ENCODE measurements at regions of chr16 and their contacts with region 1.

Region 1: GRCh38 chr16:711548-712320 is 3.2 kb upstream of the METRN start:
- DNase-seq: peak; percentile 90
- ATAC-seq: peak; percentile 67

Region 2: DNA sequence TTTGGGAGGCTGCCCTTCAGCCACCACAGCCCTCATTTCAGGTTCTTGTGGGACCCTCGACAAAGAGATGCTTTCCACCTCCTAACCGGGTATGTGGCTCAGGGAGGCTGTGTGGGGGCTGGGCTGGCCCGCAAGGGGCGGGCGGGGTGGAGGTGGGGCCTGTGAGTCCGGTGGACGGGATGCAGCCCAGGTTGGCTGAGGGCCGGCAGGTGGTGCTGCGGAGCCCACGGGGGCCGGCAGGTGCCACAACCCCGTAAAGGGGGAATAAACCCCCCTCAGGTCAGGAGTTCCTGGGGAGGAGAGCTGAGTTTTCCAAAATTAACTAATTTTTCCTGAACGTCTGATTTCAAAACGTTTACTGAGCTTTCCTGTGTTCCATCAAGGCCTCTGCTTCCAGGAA is 34.0 kb after region 1 on chr16:
- intact Hi-C with region 1: loop called (anchors 5 kb)
- DNase-seq: no peak
- ATAC-seq: no peak

Region 3: GRCh38 chr16:785563-786535 is 74.1 kb after region 1 on chr16:
- intact Hi-C with region 1: loop called (anchors 2 kb)
- DNase-seq: peak; percentile 84
- ATAC-seq: peak; percentile 24

Region 4: GRCh38 chr16:986925-987582 is 275.3 kb after region 1 on chr16:
- intact Hi-C with region 1: no loop called
- DNase-seq: no peak
- ATAC-seq: no peak

Measured in sciatic nerve (tissue), 2 donors.